ENCODE measurements at regions of chr15 and their contacts with region 1.

Region 1: DNA sequence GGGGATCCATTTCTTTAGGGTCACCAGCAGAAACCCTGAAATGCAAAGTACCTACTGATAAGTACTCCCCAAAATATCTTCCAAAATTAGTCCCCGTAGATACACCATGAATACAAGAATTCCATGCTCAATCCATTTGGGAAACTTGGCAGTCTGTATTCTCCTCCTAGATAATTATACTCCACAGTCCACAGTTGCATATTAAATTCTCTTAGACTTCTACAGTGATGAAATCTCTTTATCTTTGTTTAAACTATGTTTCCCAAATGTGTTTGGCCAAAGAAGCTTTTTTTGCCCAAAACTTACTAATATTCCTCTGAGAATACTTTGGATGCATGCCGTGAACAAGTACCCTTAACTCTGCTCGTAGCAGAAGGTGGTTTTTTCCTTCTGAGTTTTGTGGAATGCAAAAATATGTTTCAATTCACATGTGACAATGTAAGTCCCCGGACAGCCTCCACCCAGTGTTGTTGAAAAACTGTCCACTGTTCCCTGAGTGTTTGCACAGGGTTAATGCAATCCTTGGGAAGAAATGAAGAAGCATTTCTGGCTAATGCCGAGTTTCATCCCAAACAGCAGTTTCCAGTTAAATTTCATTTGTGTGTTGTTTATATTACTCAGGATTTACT is 126.7 kb downstream of the ARNT2 start:
- DNase-seq: no peak
- ATAC-seq: no peak
- H3K4me3 ChIP-seq: no peak overlapping the region
- H3K4me3 Mint-ChIP-seq: no peak overlapping the region
- H3K27ac ChIP-seq: no peak overlapping the region
- H3K27ac Mint-ChIP-seq: no peak overlapping the region
- H3K4me1 ChIP-seq: no peaks in the 10 kb centered on the region
- H3K4me1 Mint-ChIP-seq: no peaks in the 10 kb centered on the region
- H3K27me3 ChIP-seq: peaks cover 0 to 3% of the 10 kb centered on the region in 2 experiments
- H3K27me3 Mint-ChIP-seq: peaks cover 45% of the 10 kb centered on the region
- CTCF ChIP-seq: no peak

Region 2: DNA sequence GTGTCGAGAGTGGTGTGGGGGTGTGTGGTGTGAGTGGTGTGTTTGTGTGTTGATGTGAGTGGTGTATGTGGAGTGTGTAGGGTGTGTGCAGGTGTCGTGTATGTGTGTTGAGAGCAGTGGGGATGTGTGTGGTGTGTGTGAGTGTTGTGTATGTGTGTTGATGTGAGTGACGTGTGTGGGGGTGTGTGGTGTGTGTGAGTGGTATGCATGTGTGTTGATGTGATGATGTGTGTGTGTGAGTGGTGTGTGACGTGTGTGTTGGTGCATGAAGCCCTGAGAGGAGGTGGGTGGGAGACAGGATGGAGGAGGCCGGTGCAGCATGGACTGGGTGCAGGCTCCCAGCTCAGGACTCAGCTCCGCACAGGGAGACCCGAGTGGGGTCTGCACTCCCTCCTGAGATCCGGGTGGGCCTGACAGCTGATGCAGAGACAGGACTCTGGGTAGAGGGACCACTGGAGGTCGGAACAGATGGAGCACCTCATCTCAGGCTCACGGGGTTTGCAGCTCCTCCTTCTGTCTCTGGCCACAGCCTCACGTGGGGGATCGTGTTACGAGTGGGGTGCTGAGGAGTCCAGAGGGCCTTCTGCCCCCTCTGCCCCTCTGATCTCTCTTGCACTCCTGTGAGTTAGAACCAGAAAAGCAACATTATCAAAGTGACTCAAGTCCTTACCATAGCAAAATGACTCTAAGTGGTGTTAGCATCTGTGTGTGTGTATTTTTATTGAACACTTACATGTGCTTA is 85.4 kb before region 1 on chr15:
- CTCF ChIA-PET with region 1: no interaction called
- POLR2A ChIA-PET with region 1: no interaction called
- intact Hi-C with region 1: no loop called
- DNase-seq: no peak
- ATAC-seq: no peak
- H3K4me3 ChIP-seq: no peak overlapping the region
- H3K4me3 Mint-ChIP-seq: no peak overlapping the region
- H3K27ac ChIP-seq: no peak overlapping the region
- H3K27ac Mint-ChIP-seq: no peak overlapping the region
- H3K4me1 ChIP-seq: no peaks in the 10 kb centered on the region
- H3K4me1 Mint-ChIP-seq: no peaks in the 10 kb centered on the region
- H3K27me3 ChIP-seq: peaks cover 4% of the 10 kb centered on the region in 2 experiments
- H3K27me3 Mint-ChIP-seq: peaks cover 14% of the 10 kb centered on the region
- CTCF ChIP-seq: no peak

Region 3: GRCh38 chr15:80599359-80599758 is 68.5 kb after region 1 on chr15:
- CTCF ChIA-PET with region 1: no interaction called
- POLR2A ChIA-PET with region 1: no interaction called
- intact Hi-C with region 1: loop called in 1 of 2 experiments (anchors 10 kb)
- DNase-seq: no peak
- ATAC-seq: no peak
- H3K4me3 ChIP-seq: no peak overlapping the region
- H3K4me3 Mint-ChIP-seq: no peak overlapping the region
- H3K27ac ChIP-seq: no peak overlapping the region
- H3K27ac Mint-ChIP-seq: no peak overlapping the region
- H3K4me1 ChIP-seq: no peaks in the 10 kb centered on the region
- H3K4me1 Mint-ChIP-seq: no peaks in the 10 kb centered on the region
- H3K27me3 ChIP-seq: no peaks in the 10 kb centered on the region
- H3K27me3 Mint-ChIP-seq: peaks cover 12% of the 10 kb centered on the region
- CTCF ChIP-seq: no peak

Region 4: DNA sequence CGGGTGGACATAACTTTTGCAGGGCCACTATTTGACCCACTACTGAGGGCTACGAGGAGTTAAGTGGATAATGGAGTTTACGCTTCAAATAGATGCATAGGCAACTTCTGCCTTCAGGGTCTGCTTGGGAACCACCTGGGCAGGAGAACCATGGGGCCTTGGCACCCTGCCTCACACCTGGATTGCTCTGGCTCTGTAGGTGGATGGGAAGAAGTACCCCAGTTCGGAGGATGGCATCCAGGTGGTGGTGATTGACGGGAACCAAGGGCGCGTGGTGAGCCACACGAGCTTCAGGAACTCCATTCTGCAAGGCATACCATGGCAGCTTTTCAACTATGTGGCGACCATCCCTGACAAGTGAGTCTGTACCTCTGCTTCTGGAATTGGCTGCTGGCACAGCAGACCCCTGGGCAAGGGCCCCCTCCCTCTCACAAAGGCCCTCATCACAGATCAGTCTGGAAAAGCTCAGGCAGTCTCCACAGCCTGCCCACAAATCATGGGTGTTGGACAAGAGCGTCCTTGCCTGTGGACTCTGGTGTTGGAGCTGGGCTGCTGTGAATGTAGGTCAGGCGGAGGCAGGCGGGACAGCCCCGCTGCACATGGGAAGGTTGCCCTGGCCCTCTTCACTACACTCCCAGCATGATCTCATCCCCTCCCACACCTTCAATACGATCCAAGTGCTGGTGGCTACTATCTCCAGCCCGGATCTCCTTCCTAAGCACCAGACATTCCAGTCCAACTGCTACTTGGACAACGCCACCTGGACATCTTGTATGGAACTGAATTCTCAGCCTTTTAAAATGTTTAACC is 412.1 kb after region 1 on chr15:
- CTCF ChIA-PET with region 1: no interaction called
- POLR2A ChIA-PET with region 1: no interaction called
- intact Hi-C with region 1: no loop called
- DNase-seq: no peak
- ATAC-seq: no peak
- H3K4me3 ChIP-seq: no peak overlapping the region
- H3K4me3 Mint-ChIP-seq: no peak overlapping the region
- H3K27ac ChIP-seq: no peak overlapping the region
- H3K27ac Mint-ChIP-seq: no peak overlapping the region
- H3K4me1 ChIP-seq: no peaks in the 10 kb centered on the region
- H3K4me1 Mint-ChIP-seq: no peaks in the 10 kb centered on the region
- H3K27me3 ChIP-seq: no peaks in the 10 kb centered on the region
- H3K27me3 Mint-ChIP-seq: no peaks in the 10 kb centered on the region
- CTCF ChIP-seq: no peak

Measured in CD4-positive, alpha-beta T cell (primary cell).